ENCODE measurements at regions of chr11 and their contacts with region 1.

Region 1: DNA sequence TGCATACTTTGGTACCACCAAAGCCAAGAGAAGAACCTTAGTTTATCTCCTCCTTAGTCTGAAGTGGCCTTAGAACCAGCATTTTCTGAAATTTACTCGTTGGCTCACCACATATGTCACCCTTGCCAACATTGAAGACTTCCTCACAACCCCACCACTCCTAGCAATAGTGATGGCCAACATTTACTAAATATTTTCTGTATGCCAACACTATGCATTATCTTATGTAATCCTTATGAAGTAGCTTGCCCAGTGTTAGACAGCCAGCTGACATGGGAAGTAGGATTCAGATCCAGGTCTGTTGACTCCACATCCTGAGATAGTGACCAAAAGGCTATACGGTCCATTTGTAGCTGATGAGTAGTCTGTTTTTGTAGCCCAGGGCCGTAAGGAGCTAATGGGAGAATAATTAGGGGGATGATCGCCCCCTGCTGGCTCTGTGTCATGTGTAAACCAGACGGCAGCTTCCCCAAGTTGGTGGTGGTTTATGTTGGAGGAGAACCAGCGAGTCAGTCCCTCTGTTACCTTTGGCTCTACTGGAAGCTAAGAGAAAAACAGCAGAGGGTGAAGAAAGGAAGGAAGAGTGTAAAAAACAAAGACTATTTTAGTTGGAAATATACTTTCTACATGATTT is 120.5 kb upstream of the RASSF10 start:
- DNase-seq: peak; percentile 73
- CTCF ChIP-seq: peak; percentile 83

Region 2: DNA sequence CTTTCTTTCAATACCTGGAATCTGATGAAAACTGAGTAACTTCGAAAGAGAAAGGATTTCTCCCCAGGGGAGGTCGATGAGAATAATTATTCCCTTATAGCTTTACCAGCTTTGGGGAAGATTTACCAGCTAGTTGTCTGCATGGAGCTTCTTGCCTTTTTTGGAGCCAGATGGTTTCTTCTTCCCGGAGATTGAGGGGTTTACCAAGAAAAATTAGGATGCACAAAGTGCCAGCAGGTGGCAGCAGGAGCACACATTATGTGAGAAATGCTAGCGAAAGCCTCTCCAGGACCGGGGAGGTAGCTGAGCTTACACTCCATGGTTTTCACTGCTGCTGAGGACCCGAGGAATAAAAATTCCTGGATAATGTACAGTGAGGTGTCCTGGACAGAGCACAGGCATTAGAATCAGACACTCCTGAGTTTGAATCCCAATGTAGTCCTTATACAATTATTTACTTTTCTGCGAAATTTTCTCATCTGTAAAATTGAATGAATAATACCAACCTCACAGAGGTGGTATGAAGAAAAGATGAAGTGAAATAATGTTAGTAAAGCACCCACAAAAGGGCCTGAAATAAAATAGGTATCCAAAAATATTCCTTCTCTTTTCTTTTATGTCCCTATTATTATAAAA is 557.3 kb before region 1 on chr11:
- in situ Hi-C with region 1: loop called (anchors 25 kb)
- DNase-seq: peak; percentile 37
- CTCF ChIP-seq: peak; percentile 77

Region 3: GRCh38 chr11:12599408-12600143 is 289.1 kb before region 1 on chr11:
- in situ Hi-C with region 1: loop called (anchors 25 kb)
- DNase-seq: peak; percentile 37
- CTCF ChIP-seq: peak; percentile 94

Region 4: GRCh38 chr11:13923182-13923581 is 1034.5 kb after region 1 on chr11:
- in situ Hi-C with region 1: no loop called
- DNase-seq: no peak
- CTCF ChIP-seq: no peak